MCF 10A (cell line): ENCODE measurements at regions of chr4 and their contacts with region 1.

Region 1: GRCh38 chr4:7328898-7329638 is 105.7 kb downstream of the PSAPL1 start:
- DNase-seq: peak; percentile 65
- H3K4me3 Mint-ChIP-seq: no peak overlapping the region
- H3K27ac Mint-ChIP-seq: no peak overlapping the region
- H3K4me1 Mint-ChIP-seq: peaks cover 6% of the 10 kb centered on the region
- H3K27me3 Mint-ChIP-seq: no peaks in the 10 kb centered on the region
- CTCF ChIP-seq: no peak

Region 2: DNA sequence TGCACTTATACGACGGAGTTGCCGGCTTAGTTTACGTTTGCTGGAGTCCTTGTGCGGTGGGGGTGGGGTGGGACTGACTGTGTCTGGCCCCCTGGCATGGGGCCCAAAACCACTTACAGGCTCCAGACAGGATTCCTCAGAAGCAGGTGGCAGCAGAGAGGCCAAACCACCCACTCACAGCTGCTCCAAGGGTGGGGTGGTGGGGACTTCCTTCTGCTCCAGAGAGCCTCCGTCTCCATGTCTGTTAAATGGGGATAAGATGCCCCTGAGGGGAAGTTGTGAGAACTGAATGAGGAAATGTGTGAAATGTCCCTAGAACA is 69.0 kb after region 1 on chr4:
- CTCF ChIA-PET with region 1: no interaction called
- POLR2A ChIA-PET with region 1: no interaction called
- intact Hi-C with region 1: no loop called
- DNase-seq: peak; percentile 66
- H3K4me3 Mint-ChIP-seq: peak overlapping the region; percentile 15
- H3K27ac Mint-ChIP-seq: peak overlapping the region; percentile 76
- H3K4me1 Mint-ChIP-seq: peaks cover 28% of the 10 kb centered on the region
- H3K27me3 Mint-ChIP-seq: peaks cover 17% of the 10 kb centered on the region
- CTCF ChIP-seq: no peak

Region 3: DNA sequence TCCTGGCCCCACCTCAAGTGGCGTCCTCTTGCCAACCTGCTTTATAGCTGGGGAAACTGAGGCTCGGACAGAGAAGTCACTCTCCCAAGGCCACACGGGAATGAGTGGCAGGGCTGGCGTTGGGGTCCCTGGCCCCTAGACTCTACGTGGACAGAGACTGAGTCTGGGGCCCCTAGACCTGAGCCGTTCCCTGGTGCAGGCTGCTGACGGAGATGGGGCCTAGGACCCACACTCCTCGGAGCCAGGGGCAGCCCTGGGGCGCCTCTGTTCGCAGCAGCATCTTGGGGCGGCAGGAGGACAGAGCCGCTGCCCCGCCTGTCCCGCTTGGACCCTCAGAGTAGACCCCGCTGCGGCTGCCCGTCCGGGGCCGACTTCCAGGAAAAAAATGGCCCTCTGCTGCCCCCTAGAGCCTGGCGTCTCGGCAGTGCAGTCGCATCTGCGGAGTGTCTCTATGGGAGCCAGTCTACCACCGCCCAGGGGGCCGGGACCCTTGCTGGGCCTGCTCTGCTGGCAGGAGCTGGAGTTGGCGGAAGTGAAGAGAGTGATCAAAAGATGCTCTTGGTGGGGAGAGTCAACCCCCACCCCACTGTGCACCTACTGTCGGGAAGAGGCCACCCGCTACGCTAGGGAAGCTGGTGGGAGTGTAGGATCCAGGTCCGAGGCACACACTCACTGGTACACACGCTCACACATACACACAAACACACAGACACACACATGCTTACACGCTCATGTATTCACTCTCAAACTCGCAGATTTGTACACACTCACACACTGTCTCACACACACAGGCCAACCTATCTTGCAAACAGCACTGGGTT is 390.5 kb after region 1 on chr4:
- CTCF ChIA-PET with region 1: interaction called, 5 read pairs
- POLR2A ChIA-PET with region 1: no interaction called
- intact Hi-C with region 1: loop called (anchors 10 kb)
- DNase-seq: peak; percentile 38
- H3K4me3 Mint-ChIP-seq: no peak overlapping the region
- H3K27ac Mint-ChIP-seq: no peak overlapping the region
- H3K4me1 Mint-ChIP-seq: no peaks in the 10 kb centered on the region
- H3K27me3 Mint-ChIP-seq: peaks cover 24% of the 10 kb centered on the region
- CTCF ChIP-seq: peak; percentile 75